ENCODE measurements at regions of chr15 and their contacts with region 1.

Region 1: DNA sequence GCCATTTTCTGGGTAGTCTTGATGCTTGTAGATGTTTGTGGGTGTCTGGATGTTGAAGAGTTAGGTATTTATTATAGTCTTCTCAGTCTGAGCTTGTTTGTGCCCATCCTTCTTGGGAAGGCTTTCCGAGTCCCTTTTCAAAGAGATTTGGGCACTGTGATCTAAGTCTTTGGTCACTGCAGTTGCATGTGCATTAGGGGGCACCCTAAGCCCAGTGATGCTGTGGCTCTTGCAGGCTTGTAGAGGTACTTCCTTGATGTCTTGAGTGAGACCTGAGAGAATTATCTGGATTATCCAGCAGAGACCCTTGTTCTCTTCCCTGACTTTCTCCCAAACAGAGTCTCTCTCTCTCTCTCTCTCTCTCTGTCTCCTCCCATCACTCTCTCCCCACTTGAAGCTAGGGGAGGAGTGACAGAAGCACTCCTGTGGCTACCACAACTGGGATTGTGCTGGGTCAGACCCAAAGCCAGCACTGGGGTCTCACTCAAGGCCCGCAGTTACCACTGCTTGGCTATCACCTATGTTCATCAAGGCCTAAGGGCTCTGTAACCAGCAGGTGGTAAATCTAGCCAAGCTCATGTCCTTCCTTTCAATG is 68.5 kb downstream of the TMCO5A start:
- DNase-seq: peak in 2 of 4 donors; percentile 57 to 69
- ATAC-seq: peak; percentile 96
- H3K4me3 ChIP-seq: no peak overlapping the region
- H3K27ac ChIP-seq: no peak overlapping the region
- H3K4me1 ChIP-seq: peaks cover 0 to 8% of the 10 kb centered on the region in 2 donors
- H3K27me3 ChIP-seq: no peaks in the 10 kb centered on the region
- CTCF ChIP-seq: peak; percentile 55 to 71

Region 2: DNA sequence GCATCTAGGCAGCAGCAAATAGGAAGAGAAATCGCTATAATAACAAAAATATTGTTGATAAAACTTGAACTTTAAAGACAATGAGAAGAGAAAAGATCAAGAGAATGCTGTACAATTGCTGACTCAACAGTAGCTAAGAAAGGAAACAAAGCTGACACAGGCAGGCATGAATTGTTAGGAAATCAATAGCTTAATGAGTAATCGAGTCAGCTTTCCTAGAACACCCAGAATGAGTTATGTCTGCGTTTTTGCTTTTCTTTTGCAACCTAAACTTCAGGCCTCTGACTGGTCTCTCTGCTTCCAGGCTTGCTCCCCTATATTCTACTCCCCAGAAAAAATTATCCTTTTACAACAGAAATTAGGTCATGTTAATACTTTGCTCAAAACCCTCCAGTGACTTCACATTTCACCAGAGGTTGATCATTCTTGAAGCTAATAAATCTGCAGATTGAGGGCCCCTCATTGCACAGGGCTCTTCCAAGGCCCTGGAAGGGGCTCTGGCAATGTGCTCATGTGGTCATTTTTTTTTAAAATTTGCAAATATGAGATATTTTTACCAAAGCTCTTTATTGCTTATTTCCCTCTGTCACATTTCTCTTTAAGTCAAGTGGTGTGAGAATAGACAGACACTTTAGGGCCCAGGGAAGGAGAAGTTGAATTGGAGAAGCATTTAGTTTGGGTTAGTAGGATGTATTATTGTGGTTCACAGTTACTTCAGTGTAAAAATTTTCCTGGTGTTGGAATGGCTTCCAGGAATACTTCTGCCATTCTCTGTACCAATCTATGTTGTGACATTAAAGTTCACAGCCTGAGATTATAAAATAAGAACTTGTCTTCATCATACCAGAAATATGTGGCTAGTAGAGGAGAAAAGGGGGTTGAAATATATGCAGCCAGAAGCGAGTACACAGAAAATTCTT is 47.8 kb after region 1 on chr15:
- intact Hi-C with region 1: no loop called
- DNase-seq: no peak
- ATAC-seq: peak; percentile 65
- H3K4me3 ChIP-seq: no peak overlapping the region
- H3K27ac ChIP-seq: peak overlapping the region; percentile 41 to 76
- H3K4me1 ChIP-seq: peaks cover 6 to 18% of the 10 kb centered on the region in 2 donors
- H3K27me3 ChIP-seq: no peaks in the 10 kb centered on the region
- CTCF ChIP-seq: no peak

Region 3: GRCh38 chr15:38354315-38354929 is 351.4 kb after region 1 on chr15:
- intact Hi-C with region 1: loop called in 1 of 2 experiments (anchors 10 kb)
- DNase-seq: peak in 2 of 4 donors; percentile 49 to 76
- ATAC-seq: peak; percentile 77
- H3K4me3 ChIP-seq: no peak overlapping the region
- H3K27ac ChIP-seq: no peak overlapping the region
- H3K4me1 ChIP-seq: no peaks in the 10 kb centered on the region
- H3K27me3 ChIP-seq: no peaks in the 10 kb centered on the region
- CTCF ChIP-seq: peak; percentile 54 to 61

Region 4: GRCh38 chr15:38414357-38414756 is 411.4 kb after region 1 on chr15:
- intact Hi-C with region 1: loop called in 1 of 2 experiments (anchors 10 kb)
- DNase-seq: peak in 3 of 4 donors; percentile 39 to 79 (median 51)
- ATAC-seq: peak; percentile 92
- H3K4me3 ChIP-seq: no peak overlapping the region
- H3K27ac ChIP-seq: no peak overlapping the region
- H3K4me1 ChIP-seq: peaks cover 0 to 3% of the 10 kb centered on the region in 2 donors
- H3K27me3 ChIP-seq: no peaks in the 10 kb centered on the region
- CTCF ChIP-seq: peak; percentile 47 to 65